ENCODE measurements at regions of chr3 and their contacts with region 1.

Region 1: DNA sequence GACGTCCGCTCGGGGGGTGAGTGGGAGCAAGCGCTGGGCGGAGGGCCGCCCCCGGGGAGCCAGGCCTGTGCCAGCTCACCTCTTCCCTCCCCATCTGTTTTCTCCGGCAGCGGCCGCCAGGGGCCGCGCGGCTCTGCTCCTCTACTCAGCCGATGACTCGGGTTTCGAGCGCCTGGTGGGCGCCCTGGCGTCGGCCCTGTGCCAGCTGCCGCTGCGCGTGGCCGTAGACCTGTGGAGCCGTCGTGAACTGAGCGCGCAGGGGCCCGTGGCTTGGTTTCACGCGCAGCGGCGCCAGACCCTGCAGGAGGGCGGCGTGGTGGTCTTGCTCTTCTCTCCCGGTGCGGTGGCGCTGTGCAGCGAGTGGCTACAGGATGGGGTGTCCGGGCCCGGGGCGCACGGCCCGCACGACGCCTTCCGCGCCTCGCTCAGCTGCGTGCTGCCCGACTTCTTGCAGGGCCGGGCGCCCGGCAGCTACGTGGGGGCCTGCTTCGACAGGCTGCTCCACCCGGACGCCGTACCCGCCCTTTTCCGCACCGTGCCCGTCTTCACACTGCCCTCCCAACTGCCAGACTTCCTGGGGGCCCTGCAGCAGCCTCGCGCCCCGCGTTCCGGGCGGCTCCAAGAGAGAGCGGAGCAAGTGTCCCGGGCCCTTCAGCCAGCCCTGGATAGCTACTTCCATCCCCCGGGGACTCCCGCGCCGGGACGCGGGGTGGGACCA is 632 bp upstream of the CRELD1 start:
- DNase-seq: peak; percentile 92
- H3K4me3 Mint-ChIP-seq: peak overlapping the region; percentile 90
- H3K27ac Mint-ChIP-seq: peak overlapping the region; percentile 85
- H3K4me1 Mint-ChIP-seq: peaks cover 28% of the 10 kb centered on the region
- H3K27me3 Mint-ChIP-seq: no peaks in the 10 kb centered on the region

Region 2: DNA sequence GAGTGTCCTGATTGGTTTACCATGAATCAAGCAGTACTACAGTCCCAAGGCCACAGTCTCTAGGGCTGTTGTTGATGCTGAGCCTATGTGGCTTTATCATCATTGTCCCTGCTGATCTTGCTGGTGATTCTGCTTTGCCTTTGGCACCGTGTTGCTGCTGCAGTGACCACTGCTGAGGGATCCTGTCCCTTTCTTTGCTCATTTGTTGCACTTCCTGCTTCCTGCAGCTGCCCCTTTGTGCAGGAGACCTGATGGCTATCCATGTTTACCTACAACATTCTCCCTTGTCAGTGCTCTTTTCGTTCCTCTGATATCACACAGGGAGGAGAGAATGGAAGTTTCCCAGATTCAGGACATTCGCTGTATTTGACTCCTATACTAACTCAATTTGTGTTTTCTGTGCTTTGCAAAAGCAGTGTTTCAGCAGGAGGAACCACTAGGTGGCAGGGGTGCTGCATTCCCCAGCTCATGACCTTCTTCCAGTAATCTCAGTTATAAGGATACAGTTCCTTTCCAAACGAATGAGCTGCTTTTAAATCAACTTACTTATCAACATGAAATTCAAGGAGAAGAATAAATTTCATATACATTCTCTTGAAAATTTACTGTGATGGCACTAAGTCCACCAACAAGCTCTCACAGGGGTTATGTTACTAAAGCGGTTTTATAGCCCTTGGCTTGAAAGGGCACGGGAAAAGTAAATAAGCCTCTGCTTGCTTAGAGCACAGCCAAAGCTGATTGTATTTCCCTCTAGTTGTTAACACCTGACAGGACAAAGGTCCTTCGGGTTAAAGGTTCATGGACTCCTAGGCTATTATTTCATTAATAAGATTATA is 579.9 kb before region 1 on chr3:
- CTCF ChIA-PET with region 1: no interaction called
- intact Hi-C with region 1: loop called (anchors 5 kb)
- DNase-seq: peak; percentile 78
- H3K4me3 Mint-ChIP-seq: no peak overlapping the region
- H3K27ac Mint-ChIP-seq: peak overlapping the region; percentile 57
- H3K4me1 Mint-ChIP-seq: peaks cover 22% of the 10 kb centered on the region
- H3K27me3 Mint-ChIP-seq: no peaks in the 10 kb centered on the region

Region 3: GRCh38 chr3:9731206-9732079 is 201.6 kb before region 1 on chr3 and contains the start of gene BRPF1:
- CTCF ChIA-PET with region 1: interaction called, 3 read pairs
- intact Hi-C with region 1: loop called (anchors 5 kb)
- DNase-seq: peak; percentile 100
- H3K4me3 Mint-ChIP-seq: peak within 1 kb of the TSS; percentile 84
- H3K27ac Mint-ChIP-seq: peak within 1 kb of the TSS; percentile 95
- H3K4me1 Mint-ChIP-seq: peaks cover 59% of the 10 kb centered on the region
- H3K27me3 Mint-ChIP-seq: no peaks in the 10 kb centered on the region
- total RNA-seq, gene BRPF1: 16.8 to 19.4 TPM

Region 4: GRCh38 chr3:9890249-9891071 is 42.5 kb before region 1 on chr3 and contains the start of gene JAGN1:
- CTCF ChIA-PET with region 1: interaction called, 7 read pairs
- intact Hi-C with region 1: loop called (anchors 1 kb)
- DNase-seq: peak; percentile 95
- H3K4me3 Mint-ChIP-seq: peak within 1 kb of the TSS; percentile 98
- H3K27ac Mint-ChIP-seq: peak within 1 kb of the TSS; percentile 97
- H3K4me1 Mint-ChIP-seq: peaks cover 43% of the 10 kb centered on the region
- H3K27me3 Mint-ChIP-seq: no peaks in the 10 kb centered on the region
- total RNA-seq, gene JAGN1: 11.7 to 13.6 TPM

Region 5: GRCh38 chr3:9986237-9986725 is 53.3 kb after region 1 on chr3:
- CTCF ChIA-PET with region 1: interaction called, 13 read pairs
- intact Hi-C with region 1: loop called (anchors 1 kb)
- DNase-seq: no peak
- H3K4me3 Mint-ChIP-seq: peak overlapping the region; percentile 97
- H3K27ac Mint-ChIP-seq: peak overlapping the region; percentile 99
- H3K4me1 Mint-ChIP-seq: peaks cover 39% of the 10 kb centered on the region
- H3K27me3 Mint-ChIP-seq: no peaks in the 10 kb centered on the region

Region 6: DNA sequence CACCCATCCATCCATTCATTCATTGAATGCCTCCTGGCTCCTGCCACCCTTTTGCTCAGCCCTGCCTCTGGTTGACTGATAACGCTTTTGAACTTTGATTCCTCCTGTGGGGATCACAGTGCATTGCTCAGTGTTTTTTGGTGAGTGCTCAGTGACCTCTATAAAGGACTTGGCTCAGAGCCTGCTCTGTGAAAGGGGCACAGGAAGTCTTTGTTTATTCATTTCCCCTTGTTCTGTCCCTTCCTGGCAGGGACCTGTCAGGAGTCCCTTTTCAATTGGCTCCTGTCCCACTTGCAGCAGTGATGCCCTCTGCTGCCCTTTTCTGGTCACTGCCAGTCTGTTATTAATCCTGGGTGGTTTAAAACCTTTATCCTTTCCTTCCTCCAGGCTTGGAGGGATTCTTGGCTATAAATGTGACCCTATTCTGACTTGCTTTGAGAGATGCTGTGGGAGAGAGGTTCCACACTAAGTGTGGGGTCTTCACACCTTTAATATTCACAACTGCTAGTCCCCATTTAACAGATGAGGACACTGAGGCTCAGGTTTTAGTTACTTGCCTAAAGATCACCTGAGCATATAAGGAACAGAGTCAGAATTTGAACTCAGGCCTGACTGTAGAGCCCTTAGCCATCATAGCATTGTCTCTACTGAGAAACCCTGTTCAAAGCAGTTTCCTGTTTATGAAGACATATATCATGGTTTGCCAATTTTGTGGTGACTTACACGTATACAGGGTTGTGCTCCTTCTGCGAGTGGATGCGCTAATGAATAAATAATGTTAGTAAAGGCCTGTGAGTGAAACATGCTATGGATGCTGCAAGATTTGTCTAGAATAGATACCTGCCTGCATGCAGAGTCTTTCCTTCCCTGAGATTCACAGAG is 292.0 kb after region 1 on chr3:
- CTCF ChIA-PET with region 1: no interaction called
- intact Hi-C with region 1: loop called (anchors 1 kb)
- DNase-seq: peak; percentile 88
- H3K4me3 Mint-ChIP-seq: no peak overlapping the region
- H3K27ac Mint-ChIP-seq: peak overlapping the region; percentile 79
- H3K4me1 Mint-ChIP-seq: peaks cover 58% of the 10 kb centered on the region
- H3K27me3 Mint-ChIP-seq: no peaks in the 10 kb centered on the region